ENCODE measurements at regions of chr17 and their contacts with region 1.

Region 1: GRCh38 chr17:64984851-64985521 is 65.7 kb upstream of the LRRC37A3 start:
- DNase-seq: no peak
- ATAC-seq: peak; percentile 17
- H3K4me3 ChIP-seq: no peak overlapping the region
- H3K27ac ChIP-seq: peak overlapping the region; percentile 100
- H3K4me1 ChIP-seq: peaks cover 29% of the 10 kb centered on the region
- H3K27me3 ChIP-seq: no peaks in the 10 kb centered on the region
- CTCF ChIP-seq: no peak
- EP300 ChIP-seq: 0 out of 4 replicates have a peak, but pooled peaks of 1 of the 2 experiments have one; percentile 15
- POLR2A ChIP-seq: 0 out of 2 replicates have a peak, but pooled peaks have one; percentile 30
- RAD21 ChIP-seq: no peak

Region 2: DNA sequence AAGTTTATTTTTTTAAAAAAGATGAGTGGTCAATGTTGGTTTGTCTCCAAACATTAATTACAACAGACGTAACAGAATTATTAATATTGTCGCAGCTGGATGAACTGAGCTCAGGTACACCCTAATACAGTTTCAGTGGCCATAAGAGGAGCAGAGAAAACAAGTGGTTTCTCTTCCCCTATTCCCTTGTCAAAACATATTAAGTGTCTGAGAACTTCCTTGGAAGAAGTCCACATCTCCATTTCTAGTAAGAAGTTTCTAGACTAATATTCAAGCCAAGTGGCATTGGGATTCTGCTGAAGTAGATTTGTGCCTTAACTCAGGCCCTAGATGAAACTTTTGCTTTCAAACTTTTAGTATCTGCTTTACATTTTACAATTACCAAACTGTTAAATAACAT is 23.9 kb after region 1 on chr17:
- CTCF ChIA-PET with region 1: interaction called, 5 read pairs
- POLR2A ChIA-PET with region 1: interaction called, 5 read pairs
- RAD21 ChIA-PET with region 1: interaction called, 11 read pairs
- SMC1A ChIA-PET with region 1: interaction called, 22 read pairs
- in situ Hi-C with region 1: no loop called
- intact Hi-C with region 1: no loop called
- DNase-seq: no peak
- ATAC-seq: peak; percentile 38; the same call in 1 of the 3 replicates
- H3K4me3 ChIP-seq: no peak overlapping the region
- H3K27ac ChIP-seq: peak overlapping the region; percentile 13; the same call in 1 of the 2 replicates
- H3K4me1 ChIP-seq: peaks cover 37% of the 10 kb centered on the region
- H3K27me3 ChIP-seq: no peaks in the 10 kb centered on the region
- CTCF ChIP-seq: no peak
- EP300 ChIP-seq: no peak
- POLR2A ChIP-seq: no peak
- RAD21 ChIP-seq: no peak

Region 3: GRCh38 chr17:65020313-65020712 is 35.3 kb after region 1 on chr17:
- CTCF ChIA-PET with region 1: interaction called, 8 read pairs
- POLR2A ChIA-PET with region 1: interaction called, 25 read pairs
- RAD21 ChIA-PET with region 1: interaction called, 71 read pairs
- SMC1A ChIA-PET with region 1: interaction called, 52 read pairs
- in situ Hi-C with region 1: no loop called
- intact Hi-C with region 1: no loop called
- DNase-seq: no peak
- ATAC-seq: no peak
- H3K4me3 ChIP-seq: no peak overlapping the region
- H3K27ac ChIP-seq: peak overlapping the region; percentile 6; the same call in 1 of the 2 replicates
- H3K4me1 ChIP-seq: peaks cover 32% of the 10 kb centered on the region
- H3K27me3 ChIP-seq: no peaks in the 10 kb centered on the region
- CTCF ChIP-seq: no peak
- EP300 ChIP-seq: no peak
- POLR2A ChIP-seq: no peak
- RAD21 ChIP-seq: no peak

Region 4: GRCh38 chr17:65039336-65039988 is 54.5 kb after region 1 on chr17:
- CTCF ChIA-PET with region 1: interaction called, 7 read pairs
- POLR2A ChIA-PET with region 1: interaction called, 5 read pairs
- RAD21 ChIA-PET with region 1: interaction called, 11 read pairs
- SMC1A ChIA-PET with region 1: interaction called, 12 read pairs
- in situ Hi-C with region 1: no loop called
- intact Hi-C with region 1: no loop called
- DNase-seq: peak; percentile 68
- ATAC-seq: peak; percentile 85
- H3K4me3 ChIP-seq: peak overlapping the region; percentile 10
- H3K27ac ChIP-seq: peak overlapping the region; percentile 87
- H3K4me1 ChIP-seq: peaks cover 56% of the 10 kb centered on the region
- H3K27me3 ChIP-seq: no peaks in the 10 kb centered on the region
- CTCF ChIP-seq: no peak
- EP300 ChIP-seq: peak; percentile 18 to 27; a peak in 2 of 4 replicates
- POLR2A ChIP-seq: no peak
- RAD21 ChIP-seq: no peak

Region 5: GRCh38 chr17:65047942-65048341 is 63.0 kb after region 1 on chr17:
- CTCF ChIA-PET with region 1: interaction called, 7 read pairs
- POLR2A ChIA-PET with region 1: interaction called, 8 read pairs
- RAD21 ChIA-PET with region 1: interaction called, 12 read pairs
- SMC1A ChIA-PET with region 1: interaction called, 20 read pairs
- in situ Hi-C with region 1: no loop called
- intact Hi-C with region 1: no loop called
- DNase-seq: no peak
- ATAC-seq: peak; percentile 28; the same call in 1 of the 3 replicates
- H3K4me3 ChIP-seq: peak overlapping the region; percentile 48
- H3K27ac ChIP-seq: peak overlapping the region; percentile 43
- H3K4me1 ChIP-seq: peaks cover 33% of the 10 kb centered on the region
- H3K27me3 ChIP-seq: no peaks in the 10 kb centered on the region
- CTCF ChIP-seq: no peak
- EP300 ChIP-seq: no peak
- POLR2A ChIP-seq: no peak
- RAD21 ChIP-seq: no peak

Region 6: GRCh38 chr17:65055348-65056261 is 70.6 kb after region 1 on chr17:
- CTCF ChIA-PET with region 1: interaction called, 4 read pairs
- POLR2A ChIA-PET with region 1: interaction called, 7 read pairs
- RAD21 ChIA-PET with region 1: interaction called, 25 read pairs
- SMC1A ChIA-PET with region 1: interaction called, 15 read pairs
- in situ Hi-C with region 1: no loop called
- intact Hi-C with region 1: no loop called
- DNase-seq: no peak
- ATAC-seq: peak; percentile 65
- H3K4me3 ChIP-seq: peak overlapping the region; percentile 98
- H3K27ac ChIP-seq: peak overlapping the region; percentile 95
- H3K4me1 ChIP-seq: peaks cover 5% of the 10 kb centered on the region; the same call in 1 of the 2 replicates
- H3K27me3 ChIP-seq: no peaks in the 10 kb centered on the region
- CTCF ChIP-seq: no peak
- EP300 ChIP-seq: no peak
- POLR2A ChIP-seq: no peak; the same call in 1 of the 2 replicates
- RAD21 ChIP-seq: no peak

Measured in GM12878 (cell line).